ENCODE measurements at regions of chr4 and their contacts with region 1.

Region 1: GRCh38 chr4:140395668-140396067 is 22.2 kb downstream of the SCOC start:
- DNase-seq: no peak
- ATAC-seq: no peak
- H3K4me3 ChIP-seq: no peak overlapping the region
- H3K27ac ChIP-seq: no peak overlapping the region
- H3K4me1 ChIP-seq: no peaks in the 10 kb centered on the region
- H3K27me3 ChIP-seq: no peaks in the 10 kb centered on the region
- CTCF ChIP-seq: no peak

Region 2: DNA sequence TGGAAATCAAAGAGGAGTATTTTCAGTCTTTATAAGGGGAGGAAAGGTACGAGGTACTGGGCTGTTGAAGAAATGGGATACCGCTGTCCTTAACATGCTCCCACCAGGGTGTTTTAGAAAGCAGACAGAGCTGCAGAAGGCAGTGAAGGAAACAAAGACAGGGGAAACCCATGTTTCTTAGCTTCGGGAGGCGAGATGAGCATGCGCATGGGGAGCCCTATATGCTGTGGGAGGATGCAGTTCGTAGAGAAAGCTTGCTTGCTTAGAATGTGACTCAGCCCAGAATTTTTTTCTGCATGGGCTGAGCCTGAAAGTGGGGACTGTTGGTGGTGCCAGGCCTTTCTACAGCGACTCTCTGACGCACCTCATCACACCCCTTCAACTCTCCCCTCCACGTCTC is 51.0 kb before region 1 on chr4:
- intact Hi-C with region 1: loop called in 1 of 10 experiments (anchors 5 kb)
- DNase-seq: no peak
- ATAC-seq: no peak
- H3K4me3 ChIP-seq: no peak overlapping the region
- H3K27ac ChIP-seq: no peak overlapping the region
- H3K4me1 ChIP-seq: peaks cover 0 to 10% (median 0%) of the 10 kb centered on the region in 9 donors
- H3K27me3 ChIP-seq: peaks cover 0 to 13% (median 0%) of the 10 kb centered on the region in 7 donors
- CTCF ChIP-seq: no peak